Activated CD4-positive, alpha-beta T cell treated with anti-CD3 and anti-CD28 coated beads, Interleukin-2, amount 10 ng/mL, durations not matched to agents 7 days and 5 days (primary cell): ENCODE measurements at regions of chr7 and their contacts with region 1.

Region 1: GRCh38 chr7:6520163-6520981 is 30.9 kb downstream of the GRID2IP start:
- DNase-seq: no peak
- H3K4me3 Mint-ChIP-seq: no peak overlapping the region
- H3K27ac Mint-ChIP-seq: no peak overlapping the region
- H3K4me1 Mint-ChIP-seq: peaks cover 9% of the 10 kb centered on the region
- H3K27me3 Mint-ChIP-seq: peaks cover 3% of the 10 kb centered on the region

Region 2: DNA sequence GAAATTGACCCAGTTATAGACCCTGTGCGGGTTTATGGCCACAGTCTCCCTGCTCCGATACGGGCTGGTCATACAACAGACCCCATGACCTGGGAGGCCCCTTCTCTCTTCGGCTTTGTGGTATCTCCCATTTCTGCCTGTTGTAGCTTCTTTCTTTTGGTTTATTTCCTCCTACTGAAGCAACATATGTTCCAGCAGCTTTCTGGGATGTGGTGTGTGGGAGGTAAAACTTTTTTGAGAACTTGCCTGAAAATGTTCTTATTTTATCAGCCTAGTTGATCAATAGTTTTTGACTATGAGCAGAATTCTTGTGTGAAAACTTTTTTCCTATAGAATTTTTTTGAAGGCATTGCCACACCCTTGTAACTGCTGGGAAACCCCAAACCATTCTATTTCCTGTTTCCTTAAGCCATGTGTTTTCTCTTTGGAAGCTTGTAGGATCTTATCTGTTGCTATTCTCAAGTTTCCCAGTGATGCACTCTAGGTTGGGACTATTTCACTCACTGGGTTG is 152.6 kb before region 1 on chr7:
- CTCF ChIA-PET with region 1: no interaction called
- POLR2A ChIA-PET with region 1: no interaction called
- DNase-seq: no peak
- H3K4me3 Mint-ChIP-seq: no peak overlapping the region
- H3K27ac Mint-ChIP-seq: no peak overlapping the region
- H3K4me1 Mint-ChIP-seq: peaks cover 10% of the 10 kb centered on the region
- H3K27me3 Mint-ChIP-seq: no peaks in the 10 kb centered on the region

Region 3: GRCh38 chr7:6533893-6534495 is 13.6 kb after region 1 on chr7:
- CTCF ChIA-PET with region 1: interaction called, 13 read pairs
- POLR2A ChIA-PET with region 1: no interaction called
- DNase-seq: no peak
- H3K4me3 Mint-ChIP-seq: no peak overlapping the region
- H3K27ac Mint-ChIP-seq: no peak overlapping the region
- H3K4me1 Mint-ChIP-seq: peaks cover 15% of the 10 kb centered on the region
- H3K27me3 Mint-ChIP-seq: peaks cover 44% of the 10 kb centered on the region

Region 4: GRCh38 chr7:6651851-6652445 is 131.6 kb after region 1 on chr7:
- CTCF ChIA-PET with region 1: no interaction called
- POLR2A ChIA-PET with region 1: no interaction called
- DNase-seq: no peak
- H3K4me3 Mint-ChIP-seq: no peak overlapping the region
- H3K27ac Mint-ChIP-seq: no peak overlapping the region
- H3K4me1 Mint-ChIP-seq: no peaks in the 10 kb centered on the region
- H3K27me3 Mint-ChIP-seq: no peaks in the 10 kb centered on the region